ENCODE measurements at regions of chr1 and their contacts with region 1.

Region 1: GRCh38 chr1:178093205-178093957 is 523 bp upstream of the RASAL2 start:
- DNase-seq: peak; percentile 96
- H3K4me3 ChIP-seq: peak overlapping the region; percentile 48 to 93 (median 88)
- H3K27ac ChIP-seq: peak overlapping the region; percentile 68
- H3K4me1 ChIP-seq: peaks cover 25% of the 10 kb centered on the region
- H3K27me3 ChIP-seq: no peaks in the 10 kb centered on the region
- CTCF ChIP-seq: peak in 1 of 2 donors; percentile 10
- POLR2A ChIP-seq: peak; percentile 73

Region 2: DNA sequence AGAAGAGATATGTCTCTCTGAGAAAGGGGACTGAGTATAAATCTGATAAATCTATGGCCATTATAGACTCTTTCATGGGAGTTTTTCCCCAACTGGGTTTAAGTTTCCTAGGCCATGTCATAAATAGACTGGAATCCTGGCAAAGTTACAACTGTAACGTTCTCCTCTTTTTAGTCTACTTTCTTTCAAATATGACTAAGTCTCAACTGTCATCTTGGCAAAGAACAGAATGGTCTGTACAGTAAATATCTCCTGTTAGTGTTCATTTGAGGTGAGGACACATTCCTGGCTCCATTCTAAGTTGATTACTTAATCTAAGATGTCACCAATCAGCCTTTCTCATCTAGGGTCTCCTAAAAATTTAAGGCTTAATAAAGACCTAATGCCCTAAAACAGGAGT is 622.1 kb before region 1 on chr1:
- CTCF ChIA-PET with region 1: no interaction called
- POLR2A ChIA-PET with region 1: no interaction called
- dilution Hi-C with region 1: no loop called
- intact Hi-C with region 1: no loop called
- DNase-seq: no peak
- H3K4me3 ChIP-seq: no peak overlapping the region
- H3K27ac ChIP-seq: no peak overlapping the region
- H3K4me1 ChIP-seq: no peaks in the 10 kb centered on the region
- H3K27me3 ChIP-seq: no peaks in the 10 kb centered on the region
- CTCF ChIP-seq: no peak
- POLR2A ChIP-seq: no peak

Region 3: DNA sequence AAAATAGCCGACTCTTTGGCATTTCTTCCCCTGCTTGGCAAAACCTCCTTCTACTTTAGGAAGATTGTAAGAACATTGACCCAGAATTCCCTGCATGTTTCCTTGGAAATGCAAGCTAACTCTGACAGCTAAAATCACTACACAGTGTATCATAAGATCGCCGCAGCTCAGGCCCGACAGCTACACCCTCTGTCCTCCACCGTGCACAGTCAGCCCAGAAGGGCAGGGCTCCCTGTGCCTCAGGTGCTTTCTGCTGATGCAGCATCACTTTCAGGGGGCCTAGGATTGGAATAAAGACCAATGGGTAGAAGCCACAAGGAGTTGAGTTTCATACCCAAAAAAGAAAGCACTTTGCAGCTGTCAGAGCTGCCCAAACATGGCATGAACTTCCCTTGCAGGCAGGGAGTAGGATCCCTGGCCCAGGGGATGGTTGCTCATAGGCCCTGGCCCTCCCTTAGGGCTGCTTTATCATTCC is 268.8 kb before region 1 on chr1:
- CTCF ChIA-PET with region 1: no interaction called
- POLR2A ChIA-PET with region 1: no interaction called
- dilution Hi-C with region 1: no loop called
- intact Hi-C with region 1: no loop called
- DNase-seq: no peak
- H3K4me3 ChIP-seq: no peak overlapping the region
- H3K27ac ChIP-seq: no peak overlapping the region
- H3K4me1 ChIP-seq: no peaks in the 10 kb centered on the region
- H3K27me3 ChIP-seq: no peaks in the 10 kb centered on the region
- CTCF ChIP-seq: no peak
- POLR2A ChIP-seq: no peak

Region 4: GRCh38 chr1:178037503-178038253 is 55.7 kb before region 1 on chr1:
- CTCF ChIA-PET with region 1: interaction called, 11 read pairs
- POLR2A ChIA-PET with region 1: no interaction called
- dilution Hi-C with region 1: no loop called
- intact Hi-C with region 1: loop called (anchors 1 kb)
- DNase-seq: peak; percentile 76
- H3K4me3 ChIP-seq: peak overlapping the region; percentile 45 to 51 (median 48)
- H3K27ac ChIP-seq: peak overlapping the region; percentile 41
- H3K4me1 ChIP-seq: no peaks in the 10 kb centered on the region
- H3K27me3 ChIP-seq: no peaks in the 10 kb centered on the region
- CTCF ChIP-seq: peak; percentile 26 to 42
- POLR2A ChIP-seq: peak; percentile 66

Region 5: GRCh38 chr1:178126790-178127189 is 33.4 kb after region 1 on chr1:
- CTCF ChIA-PET with region 1: interaction called, 5 read pairs
- POLR2A ChIA-PET with region 1: no interaction called
- dilution Hi-C with region 1: no loop called
- intact Hi-C with region 1: loop called (anchors 2 kb)
- DNase-seq: peak; percentile 69
- H3K4me3 ChIP-seq: no peak overlapping the region
- H3K27ac ChIP-seq: peak overlapping the region; percentile 57
- H3K4me1 ChIP-seq: peaks cover 10% of the 10 kb centered on the region
- H3K27me3 ChIP-seq: no peaks in the 10 kb centered on the region
- CTCF ChIP-seq: no peak
- POLR2A ChIP-seq: no peak

Region 6: DNA sequence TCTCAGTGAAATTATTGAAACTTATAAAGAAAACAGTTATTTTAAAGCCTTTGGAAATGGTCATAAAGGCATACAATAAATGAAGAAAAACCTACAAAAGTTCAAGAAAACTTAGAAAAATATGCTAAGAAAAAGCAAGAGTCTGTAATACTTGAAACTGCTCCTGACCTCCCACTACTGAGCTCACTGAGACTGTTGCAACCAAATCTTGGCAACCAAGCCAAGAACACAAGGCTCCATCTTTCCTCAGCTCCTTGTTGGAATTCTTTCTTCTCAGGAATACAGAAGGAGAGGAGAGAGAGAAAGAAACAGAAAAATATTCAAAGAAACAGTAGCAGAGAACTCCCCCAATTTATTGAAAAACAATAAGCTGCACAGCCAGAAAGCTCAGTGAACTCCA is 161.1 kb after region 1 on chr1:
- CTCF ChIA-PET with region 1: interaction called, 11 read pairs
- POLR2A ChIA-PET with region 1: interaction called, 5 read pairs
- dilution Hi-C with region 1: no loop called
- intact Hi-C with region 1: no loop called
- DNase-seq: no peak
- H3K4me3 ChIP-seq: no peak overlapping the region
- H3K27ac ChIP-seq: no peak overlapping the region
- H3K4me1 ChIP-seq: peaks cover 12% of the 10 kb centered on the region
- H3K27me3 ChIP-seq: no peaks in the 10 kb centered on the region
- CTCF ChIP-seq: no peak
- POLR2A ChIP-seq: no peak

Region 7: DNA sequence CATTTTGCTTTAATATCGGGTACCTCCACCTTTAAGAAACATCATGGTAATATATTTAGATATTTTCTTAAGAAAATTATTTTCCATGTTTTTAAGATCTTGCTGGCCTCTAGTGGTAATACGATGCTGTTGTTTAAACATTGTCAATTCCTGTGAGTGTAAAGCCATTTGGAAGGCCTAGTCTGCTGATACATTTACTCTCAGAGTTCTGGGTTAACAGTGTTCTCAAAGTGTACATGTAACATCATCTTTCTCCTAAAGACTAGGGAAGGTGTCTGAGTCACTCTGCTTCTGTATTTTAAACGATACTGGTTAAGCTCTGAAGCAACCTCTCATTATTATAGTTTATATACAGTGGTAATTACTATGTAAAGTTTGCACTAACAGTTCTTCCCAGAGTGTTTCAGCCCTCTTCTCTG is 189.6 kb after region 1 on chr1:
- CTCF ChIA-PET with region 1: interaction called, 24 read pairs
- POLR2A ChIA-PET with region 1: no interaction called
- dilution Hi-C with region 1: no loop called
- intact Hi-C with region 1: loop called (anchors 1 kb)
- DNase-seq: peak; percentile 69
- H3K4me3 ChIP-seq: no peak overlapping the region
- H3K27ac ChIP-seq: no peak overlapping the region
- H3K4me1 ChIP-seq: no peaks in the 10 kb centered on the region
- H3K27me3 ChIP-seq: no peaks in the 10 kb centered on the region
- CTCF ChIP-seq: peak; percentile 28 to 34
- POLR2A ChIP-seq: no peak